ENCODE measurements at regions of chr17 and their contacts with region 1.

Region 1: GRCh38 chr17:30104575-30105339 is 11.9 kb upstream of the NSRP1 start:
- DNase-seq: no peak
- H3K4me3 ChIP-seq: peak overlapping the region; percentile 38
- H3K27me3 ChIP-seq: peaks cover 4% of the 10 kb centered on the region; the same call in 1 of the 2 replicates
- CTCF ChIP-seq: peak; percentile 94

Region 2: GRCh38 chr17:29855686-29856085 is 249.1 kb before region 1 on chr17:
- CTCF ChIA-PET with region 1: no interaction called
- POLR2A ChIA-PET with region 1: no interaction called
- DNase-seq: no peak
- H3K4me3 ChIP-seq: no peak overlapping the region
- H3K27me3 ChIP-seq: no peaks in the 10 kb centered on the region
- CTCF ChIP-seq: no peak

Region 3: GRCh38 chr17:30278032-30278431 is 173.3 kb after region 1 on chr17:
- CTCF ChIA-PET with region 1: interaction called, 14 read pairs
- POLR2A ChIA-PET with region 1: no interaction called
- DNase-seq: no peak
- H3K4me3 ChIP-seq: no peak overlapping the region
- H3K27me3 ChIP-seq: no peaks in the 10 kb centered on the region
- CTCF ChIP-seq: peak; percentile 41